Activated B cell treated with CpG ODN at 0.5 μM for 24 hours (primary cell): ENCODE measurements at regions of chr14 and their contacts with region 1.

Region 1: GRCh38 chr14:21510735-21511657 is at the start of gene METTL3:
- DNase-seq: peak; percentile 80
- ATAC-seq: peak; percentile 99
- H3K4me3 Mint-ChIP-seq: peak within 1 kb of the TSS; percentile 99
- H3K27ac Mint-ChIP-seq: peak within 1 kb of the TSS; percentile 96
- H3K4me1 Mint-ChIP-seq: peaks cover 29% of the 10 kb centered on the region
- H3K27me3 Mint-ChIP-seq: peaks cover 3% of the 10 kb centered on the region
- CTCF ChIP-seq: no peak
- total RNA-seq, gene METTL3: 81.9 and 94.5 TPM in 2 replicates

Region 2: DNA sequence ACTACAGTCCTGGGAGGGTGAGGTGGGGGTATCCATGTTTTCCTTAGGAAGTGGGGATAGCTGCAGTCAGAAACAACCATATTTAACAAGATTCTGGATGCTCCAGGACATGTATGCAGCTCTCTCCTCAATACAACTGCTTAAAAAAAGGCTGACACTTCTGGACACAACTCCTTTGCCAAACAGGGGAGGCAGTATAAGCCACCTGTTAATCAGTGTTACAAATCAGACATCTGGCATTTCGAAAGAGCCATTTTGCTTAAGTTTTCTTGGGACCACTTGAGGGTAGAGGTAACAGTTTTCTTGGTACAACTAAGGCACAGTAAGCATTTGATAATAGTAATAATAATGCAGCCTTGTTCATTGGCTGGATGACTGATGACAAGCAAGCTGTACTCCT is 184.0 kb before region 1 on chr14:
- CTCF ChIA-PET with region 1: no interaction called
- POLR2A ChIA-PET with region 1: no interaction called
- intact Hi-C with region 1: no loop called
- DNase-seq: no peak
- ATAC-seq: no peak
- H3K4me3 Mint-ChIP-seq: no peak overlapping the region
- H3K27ac Mint-ChIP-seq: no peak overlapping the region
- H3K4me1 Mint-ChIP-seq: no peaks in the 10 kb centered on the region
- H3K27me3 Mint-ChIP-seq: no peaks in the 10 kb centered on the region
- CTCF ChIP-seq: no peak

Region 3: GRCh38 chr14:21352587-21352986 is 158.4 kb before region 1 on chr14:
- CTCF ChIA-PET with region 1: no interaction called
- POLR2A ChIA-PET with region 1: no interaction called
- intact Hi-C with region 1: no loop called
- DNase-seq: no peak
- ATAC-seq: peak; percentile 94
- H3K4me3 Mint-ChIP-seq: peak overlapping the region; percentile 61
- H3K27ac Mint-ChIP-seq: peak overlapping the region; percentile 87
- H3K4me1 Mint-ChIP-seq: peaks cover 17% of the 10 kb centered on the region
- H3K27me3 Mint-ChIP-seq: no peaks in the 10 kb centered on the region
- CTCF ChIP-seq: no peak

Region 4: GRCh38 chr14:21367582-21368144 is 143.3 kb before region 1 on chr14:
- CTCF ChIA-PET with region 1: no interaction called
- POLR2A ChIA-PET with region 1: no interaction called
- intact Hi-C with region 1: no loop called
- DNase-seq: no peak
- ATAC-seq: no peak
- H3K4me3 Mint-ChIP-seq: no peak overlapping the region
- H3K27ac Mint-ChIP-seq: no peak overlapping the region
- H3K4me1 Mint-ChIP-seq: peaks cover 3% of the 10 kb centered on the region
- H3K27me3 Mint-ChIP-seq: no peaks in the 10 kb centered on the region
- CTCF ChIP-seq: no peak

Region 5: DNA sequence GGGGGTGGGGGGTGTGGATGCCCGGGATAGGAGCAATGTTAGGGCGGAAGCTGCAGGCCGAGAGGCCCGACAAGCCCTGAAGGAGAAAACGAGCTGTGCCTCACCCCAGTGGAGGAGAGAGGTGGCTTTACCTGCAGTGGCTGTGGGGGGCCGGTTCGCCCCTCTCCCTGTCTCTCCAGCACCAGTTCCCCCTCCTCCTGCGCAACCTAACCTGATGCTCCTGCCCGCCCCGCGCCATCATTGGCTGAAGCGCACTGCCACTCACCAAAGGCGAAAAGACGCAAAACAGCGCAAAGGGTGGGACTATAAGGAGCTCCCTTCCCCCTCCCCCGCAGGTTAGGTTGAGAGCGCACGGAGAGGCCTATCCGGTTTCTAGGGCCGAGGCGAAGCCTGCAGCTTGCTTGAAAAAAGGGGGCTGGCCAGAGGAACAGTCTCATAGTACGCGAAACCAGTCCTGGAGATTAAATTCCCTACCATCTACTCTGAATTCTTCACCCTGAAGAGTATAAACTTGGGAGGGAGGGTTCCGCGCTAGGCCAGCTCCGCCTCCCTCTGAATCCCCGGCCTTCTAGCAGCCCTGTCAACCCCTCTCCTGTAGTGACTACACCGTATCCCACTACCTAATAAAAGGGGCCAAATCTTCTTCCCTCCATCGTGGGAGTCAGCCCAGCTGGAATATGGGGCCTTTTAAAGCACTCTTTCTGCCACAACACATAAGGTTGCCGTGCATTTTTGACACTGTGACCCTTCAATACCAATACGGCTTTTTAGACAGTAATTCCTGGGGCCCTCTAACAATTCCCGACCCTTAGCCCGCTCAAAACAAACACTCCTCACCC is 73.7 kb before region 1 on chr14:
- CTCF ChIA-PET with region 1: no interaction called
- POLR2A ChIA-PET with region 1: interaction called, 20 read pairs
- intact Hi-C with region 1: loop called (anchors 1 kb)
- DNase-seq: peak; percentile 96
- ATAC-seq: peak; percentile 99
- H3K4me3 Mint-ChIP-seq: peak overlapping the region; percentile 84
- H3K27ac Mint-ChIP-seq: peak overlapping the region; percentile 87
- H3K4me1 Mint-ChIP-seq: peaks cover 56% of the 10 kb centered on the region
- H3K27me3 Mint-ChIP-seq: no peaks in the 10 kb centered on the region
- CTCF ChIP-seq: no peak

Region 6: DNA sequence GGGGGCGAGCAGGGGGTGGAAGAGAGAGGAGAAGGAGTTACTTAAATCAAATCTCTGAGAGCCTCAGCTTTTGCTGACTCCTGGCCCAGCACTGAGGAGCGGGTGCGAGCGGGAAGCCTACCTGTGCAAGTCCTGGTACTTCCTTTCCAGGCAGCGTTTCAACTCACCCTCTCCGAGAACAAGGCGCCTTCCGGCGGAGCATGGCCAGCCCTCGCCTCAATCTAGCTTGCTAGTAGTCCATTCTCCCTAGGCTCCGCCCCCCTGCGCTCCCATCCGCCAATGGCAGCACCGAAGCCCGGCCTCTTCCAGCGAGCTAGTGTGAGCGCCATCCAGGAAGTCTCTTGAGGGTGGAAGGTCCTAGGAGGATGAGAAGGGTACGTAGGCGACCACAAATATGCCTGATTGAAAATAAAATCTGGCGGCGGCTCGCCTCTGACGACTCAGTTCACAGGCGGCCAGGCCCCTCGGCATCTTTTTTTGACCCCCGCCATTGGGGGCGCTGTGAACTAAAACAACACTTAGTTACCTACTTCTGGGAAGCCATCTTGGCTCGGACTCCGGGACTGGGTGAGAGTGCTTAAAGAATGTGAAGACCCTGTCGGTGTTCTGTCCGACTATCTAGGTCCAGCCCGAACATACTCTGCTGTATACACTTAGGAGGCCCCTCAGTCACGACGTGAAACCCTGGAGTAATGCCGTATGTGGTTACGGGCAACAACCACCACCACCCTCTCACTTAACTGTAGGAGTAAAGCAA is 54.9 kb before region 1 on chr14 and contains the start of gene CHD8:
- CTCF ChIA-PET with region 1: interaction called, 3 read pairs
- POLR2A ChIA-PET with region 1: interaction called, 9 read pairs
- intact Hi-C with region 1: loop called (anchors 1 kb)
- DNase-seq: peak; percentile 91
- ATAC-seq: peak; percentile 97
- H3K4me3 Mint-ChIP-seq: peak within 1 kb of the TSS; percentile 98
- H3K27ac Mint-ChIP-seq: peak within 1 kb of the TSS; percentile 99
- H3K4me1 Mint-ChIP-seq: peaks cover 34% of the 10 kb centered on the region
- H3K27me3 Mint-ChIP-seq: no peaks in the 10 kb centered on the region
- CTCF ChIP-seq: no peak
- total RNA-seq, gene CHD8: 113 and 133 TPM in 2 replicates

Region 7: DNA sequence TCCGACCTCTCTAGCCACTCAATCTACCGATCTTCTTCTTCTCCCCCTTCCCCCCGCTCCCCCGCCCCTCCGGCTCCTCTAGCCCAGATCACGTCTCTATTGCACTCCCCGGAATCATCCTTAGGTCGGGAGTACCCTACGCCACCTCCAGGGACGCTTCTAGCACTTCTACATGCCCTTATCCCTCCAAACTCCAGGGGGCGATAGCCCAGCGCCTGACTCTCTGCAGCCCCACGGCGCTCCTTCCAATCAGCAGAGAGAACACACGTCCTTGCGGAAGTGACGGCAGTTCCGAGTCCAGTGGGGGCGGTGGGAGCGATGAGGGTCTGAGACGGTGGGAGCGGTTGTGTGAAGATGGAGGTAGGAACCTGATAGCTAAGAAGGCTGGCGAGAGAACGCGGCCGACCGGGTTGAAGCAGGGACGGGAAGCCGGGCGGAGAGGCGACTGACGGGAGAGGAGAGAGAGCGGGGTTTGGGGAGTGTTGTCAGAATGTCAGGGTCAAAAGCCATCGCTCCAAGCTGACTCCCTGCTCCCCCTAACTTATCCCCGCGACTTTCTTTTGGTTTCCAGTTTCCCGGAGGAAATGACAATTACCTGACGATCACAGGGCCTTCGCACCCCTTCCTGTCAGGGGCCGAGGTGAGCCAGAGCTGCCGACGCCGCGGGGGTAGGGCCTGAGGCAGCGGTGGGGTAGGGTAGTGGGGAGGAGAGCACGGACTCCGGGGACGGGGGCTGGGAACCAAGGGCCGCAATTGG is 33.9 kb before region 1 on chr14 and contains the starts of genes RAB2B and TOX4:
- CTCF ChIA-PET with region 1: interaction called, 4 read pairs
- POLR2A ChIA-PET with region 1: interaction called, 35 read pairs
- intact Hi-C with region 1: loop called (anchors 1 kb)
- DNase-seq: peak; percentile 84
- ATAC-seq: peak; percentile 96
- H3K4me3 Mint-ChIP-seq: peak within 1 kb of the TSS; percentile 99
- H3K27ac Mint-ChIP-seq: peak within 1 kb of the TSS; percentile 95
- H3K4me1 Mint-ChIP-seq: peaks cover 37% of the 10 kb centered on the region
- H3K27me3 Mint-ChIP-seq: no peaks in the 10 kb centered on the region
- CTCF ChIP-seq: no peak
- total RNA-seq, gene RAB2B: 25.0 and 27.5 TPM in 2 replicates
- total RNA-seq, gene TOX4: 77.2 and 81.4 TPM in 2 replicates

Region 8: GRCh38 chr14:21498553-21499526 is 12.2 kb before region 1 on chr14:
- CTCF ChIA-PET with region 1: interaction called, 15 read pairs
- POLR2A ChIA-PET with region 1: interaction called, 9 read pairs
- intact Hi-C with region 1: no loop called
- DNase-seq: no peak
- ATAC-seq: peak; percentile 70
- H3K4me3 Mint-ChIP-seq: no peak overlapping the region
- H3K27ac Mint-ChIP-seq: no peak overlapping the region
- H3K4me1 Mint-ChIP-seq: no peaks in the 10 kb centered on the region
- H3K27me3 Mint-ChIP-seq: no peaks in the 10 kb centered on the region
- CTCF ChIP-seq: no peak

Region 9: DNA sequence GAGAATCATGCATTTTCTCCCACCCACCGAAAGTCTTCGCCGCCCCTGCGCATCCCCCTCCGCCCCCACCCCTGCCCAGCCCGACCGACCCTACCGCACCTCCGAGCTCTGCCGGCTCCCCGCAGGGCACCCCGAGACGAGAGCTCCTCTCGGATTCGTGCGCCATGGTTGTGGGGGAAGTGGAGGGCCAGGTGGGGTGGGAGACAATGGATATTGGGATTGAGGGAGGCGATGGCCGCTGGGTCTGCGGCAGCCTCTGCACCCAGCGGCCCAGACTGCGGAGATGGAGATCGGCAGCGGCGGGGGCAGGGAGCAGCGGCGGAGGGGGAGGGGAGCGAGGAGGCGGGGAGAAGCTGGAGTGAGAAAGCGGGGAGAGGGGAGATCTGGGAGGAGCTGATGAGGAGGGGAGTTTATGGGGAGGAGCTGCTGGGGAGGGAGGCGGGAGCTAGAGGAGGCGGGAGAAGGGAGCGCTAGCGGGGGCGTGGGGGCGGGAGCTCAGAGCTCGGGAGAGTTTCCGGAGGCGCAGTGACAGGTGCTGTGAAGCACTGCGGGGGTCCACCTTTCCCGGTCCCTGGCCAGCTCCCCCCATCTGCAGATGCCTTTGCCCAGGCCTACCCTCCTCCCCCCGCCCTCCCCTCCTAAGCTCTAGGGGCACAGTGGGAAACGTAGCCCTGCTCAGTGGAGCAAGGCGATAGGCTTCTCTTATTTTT is 15.1 kb after region 1 on chr14 and contains the start of gene SALL2:
- CTCF ChIA-PET with region 1: no interaction called
- POLR2A ChIA-PET with region 1: interaction called, 16 read pairs
- intact Hi-C with region 1: no loop called
- DNase-seq: no peak
- ATAC-seq: peak; percentile 64
- H3K4me3 Mint-ChIP-seq: peak within 1 kb of the TSS; percentile 85
- H3K27ac Mint-ChIP-seq: no peak within 1 kb of the TSS
- H3K4me1 Mint-ChIP-seq: peaks cover 10% of the 10 kb centered on the region
- H3K27me3 Mint-ChIP-seq: peaks cover 12% of the 10 kb centered on the region
- CTCF ChIP-seq: no peak
- total RNA-seq, gene SALL2: 0.24 and 0.37 TPM in 2 replicates

Region 10: GRCh38 chr14:21902650-21903103 is 391.7 kb after region 1 on chr14:
- CTCF ChIA-PET with region 1: no interaction called
- POLR2A ChIA-PET with region 1: no interaction called
- intact Hi-C with region 1: no loop called
- DNase-seq: no peak
- ATAC-seq: peak; percentile 49
- H3K4me3 Mint-ChIP-seq: no peak overlapping the region
- H3K27ac Mint-ChIP-seq: no peak overlapping the region
- H3K4me1 Mint-ChIP-seq: peaks cover 6% of the 10 kb centered on the region
- H3K27me3 Mint-ChIP-seq: peaks cover 21% of the 10 kb centered on the region
- CTCF ChIP-seq: no peak